Head of caudate nucleus (tissue), 42 donors: ENCODE measurements at regions of chr1 and their contacts with region 1.

Region 1: GRCh38 chr1:156282479-156283222 is at the start of gene SMG5:
- DNase-seq: peak; percentile 88 to 99 (median 96)

Region 2: GRCh38 chr1:156338180-156338973 is 55.7 kb after region 1 on chr1 and contains the starts of genes CCT3 and TSACC:
- intact Hi-C with region 1: loop called (anchors 2 kb)
- DNase-seq: peak; percentile 91 to 100 (median 98)

Region 3: GRCh38 chr1:156356875-156357534 is 74.4 kb after region 1 on chr1:
- intact Hi-C with region 1: no loop called
- DNase-seq: peak in 36 of 42 donors; percentile 15 to 81 (median 46)